ENCODE measurements at regions of chr10 and their contacts with region 1.

Region 1: DNA sequence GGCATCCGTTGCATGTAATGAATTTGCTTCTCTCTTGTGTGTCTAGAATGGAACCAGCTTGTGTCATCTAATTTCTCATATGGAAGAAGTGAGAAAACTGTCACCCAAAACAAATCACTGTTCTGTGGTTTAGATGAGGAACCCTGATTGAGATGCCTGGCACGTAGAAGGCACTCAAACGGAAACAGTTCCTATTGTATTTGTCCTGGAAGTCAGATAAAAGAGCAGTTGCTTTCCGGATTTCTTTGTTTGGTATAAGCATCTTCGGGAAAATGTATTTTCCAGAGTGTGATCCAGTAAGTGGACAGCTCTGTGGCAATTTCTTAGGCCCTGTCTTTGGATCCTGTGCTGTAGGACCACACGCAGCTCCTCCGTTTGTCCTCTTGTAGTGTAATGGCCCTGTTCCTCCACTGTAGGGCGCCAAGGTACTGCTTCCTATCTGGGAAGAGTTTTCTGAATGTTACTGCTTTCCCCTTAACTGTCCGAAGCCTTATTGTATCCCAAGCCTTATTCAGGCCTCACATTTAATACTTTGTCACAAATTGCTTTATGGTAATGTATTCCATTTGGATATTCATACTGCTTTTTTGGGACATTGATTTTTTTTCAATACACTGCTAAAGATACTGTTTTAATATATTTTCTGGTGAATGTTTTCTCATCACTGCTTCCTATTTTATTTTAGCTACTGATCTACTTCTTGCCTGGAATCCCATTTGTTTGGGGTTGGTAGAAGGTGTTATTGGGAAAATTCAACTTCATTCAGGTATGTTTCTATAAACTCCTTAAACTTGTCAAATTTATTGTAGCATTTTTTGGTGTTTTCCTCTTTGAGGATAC is 24.8 kb downstream of the INPP5F start:
- DNase-seq: peak; percentile 76 to 82
- H3K4me3 ChIP-seq: no peak overlapping the region
- H3K4me3 Mint-ChIP-seq: no peak overlapping the region
- H3K27ac Mint-ChIP-seq: peak overlapping the region; percentile 7
- H3K4me1 ChIP-seq: peaks cover 14% of the 10 kb centered on the region; the same call in 1 of the 2 replicates
- H3K4me1 Mint-ChIP-seq: peaks cover 25% of the 10 kb centered on the region
- H3K27me3 ChIP-seq: no peaks in the 10 kb centered on the region
- H3K27me3 Mint-ChIP-seq: no peaks in the 10 kb centered on the region
- CTCF ChIP-seq: peak; percentile 90 to 96

Region 2: GRCh38 chr10:119333146-119333792 is 417.3 kb before region 1 on chr10:
- CTCF ChIA-PET with region 1: no interaction called
- POLR2A ChIA-PET with region 1: no interaction called
- intact Hi-C with region 1: no loop called
- DNase-seq: no peak
- H3K4me3 ChIP-seq: no peak overlapping the region
- H3K4me3 Mint-ChIP-seq: no peak overlapping the region
- H3K27ac Mint-ChIP-seq: peak overlapping the region; percentile 25
- H3K4me1 ChIP-seq: peaks cover 16% of the 10 kb centered on the region
- H3K4me1 Mint-ChIP-seq: peaks cover 6% of the 10 kb centered on the region
- H3K27me3 ChIP-seq: no peaks in the 10 kb centered on the region
- H3K27me3 Mint-ChIP-seq: no peaks in the 10 kb centered on the region
- CTCF ChIP-seq: no peak

Region 3: GRCh38 chr10:119608316-119609155 is 142.1 kb before region 1 on chr10:
- CTCF ChIA-PET with region 1: interaction called, 7 read pairs
- POLR2A ChIA-PET with region 1: no interaction called
- intact Hi-C with region 1: loop called (anchors 1 kb)
- DNase-seq: peak; percentile 68 to 74
- H3K4me3 ChIP-seq: peak overlapping the region; percentile 22; the same call in 1 of the 2 replicates
- H3K4me3 Mint-ChIP-seq: peak overlapping the region; percentile 67
- H3K27ac Mint-ChIP-seq: no peak overlapping the region
- H3K4me1 ChIP-seq: no peaks in the 10 kb centered on the region; the same call in 1 of the 2 replicates
- H3K4me1 Mint-ChIP-seq: peaks cover 12% of the 10 kb centered on the region
- H3K27me3 ChIP-seq: no peaks in the 10 kb centered on the region
- H3K27me3 Mint-ChIP-seq: no peaks in the 10 kb centered on the region
- CTCF ChIP-seq: peak; percentile 76 to 92

Region 4: GRCh38 chr10:119725828-119726675 is 24.6 kb before region 1 on chr10 and contains the start of gene INPP5F:
- CTCF ChIA-PET with region 1: interaction called, 13 read pairs
- POLR2A ChIA-PET with region 1: interaction called, 8 read pairs
- intact Hi-C with region 1: no loop called
- DNase-seq: peak; percentile 100
- H3K4me3 ChIP-seq: peak within 1 kb of the TSS; percentile 82
- H3K4me3 Mint-ChIP-seq: peak within 1 kb of the TSS; percentile 91
- H3K27ac Mint-ChIP-seq: peak within 1 kb of the TSS; percentile 90
- H3K4me1 ChIP-seq: peaks cover 40% of the 10 kb centered on the region
- H3K4me1 Mint-ChIP-seq: peaks cover 47% of the 10 kb centered on the region
- H3K27me3 ChIP-seq: no peaks in the 10 kb centered on the region
- H3K27me3 Mint-ChIP-seq: no peaks in the 10 kb centered on the region
- CTCF ChIP-seq: peak in 1 of 2 experiments; percentile 24
- total RNA-seq, gene INPP5F: 26.4 and 26.9 TPM in 2 replicates

Region 5: GRCh38 chr10:119786117-119786769 is 35.6 kb after region 1 on chr10:
- CTCF ChIA-PET with region 1: interaction called, 5 read pairs
- POLR2A ChIA-PET with region 1: no interaction called
- intact Hi-C with region 1: loop called (anchors 2 kb)
- DNase-seq: peak; percentile 74 to 86
- H3K4me3 ChIP-seq: no peak overlapping the region
- H3K4me3 Mint-ChIP-seq: peak overlapping the region; percentile 65
- H3K27ac Mint-ChIP-seq: peak overlapping the region; percentile 96
- H3K4me1 ChIP-seq: peaks cover 35% of the 10 kb centered on the region
- H3K4me1 Mint-ChIP-seq: peaks cover 49% of the 10 kb centered on the region
- H3K27me3 ChIP-seq: no peaks in the 10 kb centered on the region
- H3K27me3 Mint-ChIP-seq: no peaks in the 10 kb centered on the region
- CTCF ChIP-seq: no peak

Region 6: DNA sequence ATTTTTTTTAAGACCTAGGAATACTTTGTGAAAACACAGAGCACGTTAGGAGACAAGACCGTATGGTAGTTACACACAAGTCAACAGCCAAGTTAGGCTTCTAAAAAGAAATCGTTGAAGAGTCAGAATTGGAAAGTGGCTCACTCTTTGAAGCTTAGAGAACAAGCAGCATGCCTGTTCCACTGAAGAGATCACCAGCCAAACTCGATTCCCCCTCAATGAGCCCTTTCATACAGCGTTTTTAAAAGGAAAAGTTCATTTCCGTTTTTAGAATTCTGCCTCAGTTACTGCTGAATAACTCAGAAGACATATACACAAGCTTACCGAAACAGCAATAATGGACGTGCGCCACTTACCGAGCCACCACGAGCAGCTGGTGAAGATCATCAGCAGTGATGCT is 81.0 kb after region 1 on chr10:
- CTCF ChIA-PET with region 1: interaction called, 6 read pairs
- POLR2A ChIA-PET with region 1: no interaction called
- intact Hi-C with region 1: loop called (anchors 2 kb)
- DNase-seq: no peak
- H3K4me3 ChIP-seq: no peak overlapping the region
- H3K4me3 Mint-ChIP-seq: no peak overlapping the region
- H3K27ac Mint-ChIP-seq: no peak overlapping the region
- H3K4me1 ChIP-seq: no peaks in the 10 kb centered on the region; the same call in 1 of the 2 replicates
- H3K4me1 Mint-ChIP-seq: peaks cover 19% of the 10 kb centered on the region
- H3K27me3 ChIP-seq: no peaks in the 10 kb centered on the region
- H3K27me3 Mint-ChIP-seq: no peaks in the 10 kb centered on the region
- CTCF ChIP-seq: no peak

Region 7: GRCh38 chr10:119859420-119860258 is 109.0 kb after region 1 on chr10:
- CTCF ChIA-PET with region 1: interaction called, 31 read pairs
- POLR2A ChIA-PET with region 1: no interaction called
- intact Hi-C with region 1: loop called (anchors 1 kb)
- DNase-seq: peak in 1 of 2 experiments; percentile 34
- H3K4me3 ChIP-seq: no peak overlapping the region
- H3K4me3 Mint-ChIP-seq: no peak overlapping the region
- H3K27ac Mint-ChIP-seq: peak overlapping the region; percentile 45
- H3K4me1 ChIP-seq: peaks cover 14% of the 10 kb centered on the region; the same call in 1 of the 2 replicates
- H3K4me1 Mint-ChIP-seq: peaks cover 13% of the 10 kb centered on the region
- H3K27me3 ChIP-seq: no peaks in the 10 kb centered on the region
- H3K27me3 Mint-ChIP-seq: no peaks in the 10 kb centered on the region
- CTCF ChIP-seq: peak; percentile 44 to 45

Region 8: GRCh38 chr10:119917750-119918149 is 167.1 kb after region 1 on chr10:
- CTCF ChIA-PET with region 1: no interaction called
- POLR2A ChIA-PET with region 1: no interaction called
- intact Hi-C with region 1: loop called (anchors 1 kb)
- DNase-seq: no peak
- H3K4me3 ChIP-seq: no peak overlapping the region
- H3K4me3 Mint-ChIP-seq: no peak overlapping the region
- H3K27ac Mint-ChIP-seq: no peak overlapping the region
- H3K4me1 ChIP-seq: no peaks in the 10 kb centered on the region
- H3K4me1 Mint-ChIP-seq: no peaks in the 10 kb centered on the region
- H3K27me3 ChIP-seq: no peaks in the 10 kb centered on the region
- H3K27me3 Mint-ChIP-seq: no peaks in the 10 kb centered on the region
- CTCF ChIP-seq: no peak

Measured in Caco-2 (cell line).